CD4-positive, alpha-beta memory T cell (primary cell): ENCODE measurements at regions of chr3 and their contacts with region 1.

Region 1: DNA sequence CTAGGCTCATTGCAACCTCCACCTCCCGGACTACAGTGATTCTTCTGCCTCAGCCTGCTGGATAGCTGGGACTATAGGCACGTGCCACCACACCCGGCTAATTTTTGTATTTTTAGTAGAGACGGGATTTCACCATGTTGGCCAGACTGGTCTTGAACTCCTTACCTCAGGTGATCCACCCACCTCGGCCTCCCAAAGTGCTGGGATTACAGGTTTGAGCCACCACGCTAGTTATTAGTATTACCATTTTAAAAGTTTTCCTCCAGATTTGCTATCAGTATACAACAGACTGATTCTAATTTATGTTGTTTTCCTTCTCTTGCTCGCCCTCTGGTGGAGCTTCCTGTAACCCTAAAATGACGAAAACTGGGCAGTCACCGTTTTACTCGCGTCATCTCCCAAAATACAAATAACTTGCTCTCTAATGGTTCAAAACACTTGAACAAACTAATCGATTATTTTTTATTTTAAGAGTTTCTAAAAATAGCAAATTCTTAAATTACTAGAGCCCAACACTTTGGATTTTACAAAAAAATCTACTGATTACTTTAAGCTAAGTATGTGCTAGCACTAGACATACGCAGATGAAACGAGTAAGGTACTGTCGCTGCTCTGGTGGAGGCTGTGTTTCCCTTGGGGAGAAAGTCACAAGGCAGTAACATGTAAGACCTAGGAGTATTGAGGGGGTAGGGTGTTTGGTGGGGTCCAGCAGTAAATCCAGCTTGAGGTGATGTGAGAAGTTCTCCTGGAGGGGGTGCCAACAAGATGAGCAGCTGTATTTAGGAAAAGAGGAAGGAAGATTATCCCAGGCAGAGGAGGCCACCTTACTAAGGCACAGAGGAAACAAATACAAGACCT is 203.3 kb downstream of the MBNL1 start:
- DNase-seq: peak; percentile 65 to 74 (median 70)
- H3K4me3 ChIP-seq: no peak overlapping the region
- H3K4me3 Mint-ChIP-seq: peak overlapping the region; percentile 35 to 81 (median 65)
- H3K27ac ChIP-seq: peak overlapping the region; percentile 36
- H3K27ac Mint-ChIP-seq: peak overlapping the region; percentile 18 to 93 (median 85)
- H3K4me1 ChIP-seq: peaks cover 11% of the 10 kb centered on the region
- H3K4me1 Mint-ChIP-seq: peaks cover 13 to 19% (median 13%) of the 10 kb centered on the region in 4 donors
- H3K27me3 ChIP-seq: no peaks in the 10 kb centered on the region
- H3K27me3 Mint-ChIP-seq: no peaks in the 10 kb centered on the region

Region 2: DNA sequence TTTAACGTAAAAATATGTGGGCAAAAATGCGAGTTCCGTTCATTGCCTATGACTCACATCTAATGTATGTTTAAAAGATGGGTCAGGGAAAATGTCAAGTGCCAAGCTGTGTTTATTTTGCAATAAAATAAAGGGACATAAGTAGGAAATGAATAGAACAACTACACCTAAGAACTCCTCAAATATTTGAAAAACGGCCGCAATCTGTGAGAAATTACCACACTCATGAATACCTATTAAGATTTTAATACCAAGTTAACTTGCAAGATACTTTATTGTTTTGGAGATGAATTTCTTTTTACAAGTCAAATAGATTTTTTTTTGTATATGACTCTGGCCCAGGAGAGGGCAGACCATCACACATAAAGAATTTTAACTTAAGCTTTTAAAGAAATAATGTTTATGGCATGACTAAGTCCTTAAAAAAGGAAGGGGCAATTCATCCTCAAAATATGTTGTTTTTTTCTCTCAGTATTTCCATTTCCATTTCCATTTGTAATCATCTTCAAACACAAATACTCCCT is 445.9 kb before region 1 on chr3:
- CTCF ChIA-PET with region 1: no interaction called
- POLR2A ChIA-PET with region 1: no interaction called
- intact Hi-C with region 1: loop called (anchors 1 kb)
- DNase-seq: no peak
- H3K4me3 ChIP-seq: no peak overlapping the region
- H3K4me3 Mint-ChIP-seq: no peak overlapping the region
- H3K27ac ChIP-seq: no peak overlapping the region
- H3K27ac Mint-ChIP-seq: no peak overlapping the region
- H3K4me1 ChIP-seq: no peaks in the 10 kb centered on the region
- H3K4me1 Mint-ChIP-seq: peaks cover 0 to 2% (median 0%) of the 10 kb centered on the region in 4 donors
- H3K27me3 ChIP-seq: no peaks in the 10 kb centered on the region
- H3K27me3 Mint-ChIP-seq: peaks cover 0 to 2% of the 10 kb centered on the region in 2 donors

Region 3: GRCh38 chr3:152071924-152072323 is 400.1 kb before region 1 on chr3:
- CTCF ChIA-PET with region 1: interaction called, 19 read pairs
- POLR2A ChIA-PET with region 1: interaction called, 5 read pairs
- intact Hi-C with region 1: loop called (anchors 1 kb)
- DNase-seq: peak in 4 of 5 donors; percentile 22 to 45 (median 36)
- H3K4me3 ChIP-seq: no peak overlapping the region
- H3K4me3 Mint-ChIP-seq: no peak overlapping the region
- H3K27ac ChIP-seq: no peak overlapping the region
- H3K27ac Mint-ChIP-seq: no peak overlapping the region
- H3K4me1 ChIP-seq: no peaks in the 10 kb centered on the region
- H3K4me1 Mint-ChIP-seq: peaks cover 0 to 3% (median 1%) of the 10 kb centered on the region in 4 donors
- H3K27me3 ChIP-seq: no peaks in the 10 kb centered on the region
- H3K27me3 Mint-ChIP-seq: no peaks in the 10 kb centered on the region